Heart left ventricle (tissue), 16 donors: ENCODE measurements at regions of chr1 and their contacts with region 1.

Region 1: DNA sequence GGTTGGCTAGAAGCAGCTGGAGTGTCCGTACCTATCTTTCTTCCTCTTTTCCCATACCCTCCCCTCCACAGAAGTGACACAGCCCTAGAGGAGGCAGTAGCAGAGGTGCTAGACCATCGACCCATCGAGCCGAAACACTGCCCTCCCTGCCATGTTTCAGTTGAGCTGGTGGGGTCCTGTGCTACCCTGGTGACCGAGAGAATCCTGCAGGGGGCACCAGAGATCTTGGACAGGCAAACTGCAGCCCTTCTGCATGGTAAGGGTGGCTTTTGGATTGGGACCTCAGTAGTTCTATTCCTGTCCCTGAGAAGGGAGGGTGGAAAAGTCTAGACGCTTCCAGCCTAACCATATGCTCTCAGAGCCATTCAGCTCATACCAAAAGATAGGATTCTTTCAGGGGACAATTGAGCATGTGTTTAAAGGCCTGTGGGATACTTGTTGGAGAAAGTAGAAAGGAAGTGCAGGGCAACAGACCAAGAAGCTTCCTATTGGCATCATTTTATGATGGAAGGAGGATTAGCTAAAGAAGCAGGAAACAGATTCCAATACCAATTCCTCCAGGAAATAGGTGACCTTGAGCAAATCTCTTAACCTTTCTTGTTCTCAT is 11.7 kb upstream of the BNIPL start:
- DNase-seq: peak; percentile 85 to 90 (median 87)
- ATAC-seq: peak; percentile 88 to 95 (median 90)
- H3K4me3 ChIP-seq: no peak overlapping the region
- H3K27ac ChIP-seq: peak overlapping the region; percentile 37 to 87 (median 79)
- H3K4me1 ChIP-seq: peaks cover 0 to 30% (median 8%) of the 10 kb centered on the region in 12 donors
- H3K27me3 ChIP-seq: no peaks in the 10 kb centered on the region
- CTCF ChIP-seq: peak; percentile 63 to 84 (median 77)
- POLR2A ChIP-seq: no peak

Region 2: GRCh38 chr1:150955280-150955679 is 69.4 kb before region 1 on chr1:
- intact Hi-C with region 1: no loop called
- DNase-seq: no peak
- ATAC-seq: peak in 1 of 4 donors; percentile 57
- H3K4me3 ChIP-seq: no peak overlapping the region
- H3K27ac ChIP-seq: no peak overlapping the region
- H3K4me1 ChIP-seq: no peaks in the 10 kb centered on the region
- H3K27me3 ChIP-seq: no peaks in the 10 kb centered on the region
- CTCF ChIP-seq: no peak
- POLR2A ChIP-seq: no peak

Region 3: DNA sequence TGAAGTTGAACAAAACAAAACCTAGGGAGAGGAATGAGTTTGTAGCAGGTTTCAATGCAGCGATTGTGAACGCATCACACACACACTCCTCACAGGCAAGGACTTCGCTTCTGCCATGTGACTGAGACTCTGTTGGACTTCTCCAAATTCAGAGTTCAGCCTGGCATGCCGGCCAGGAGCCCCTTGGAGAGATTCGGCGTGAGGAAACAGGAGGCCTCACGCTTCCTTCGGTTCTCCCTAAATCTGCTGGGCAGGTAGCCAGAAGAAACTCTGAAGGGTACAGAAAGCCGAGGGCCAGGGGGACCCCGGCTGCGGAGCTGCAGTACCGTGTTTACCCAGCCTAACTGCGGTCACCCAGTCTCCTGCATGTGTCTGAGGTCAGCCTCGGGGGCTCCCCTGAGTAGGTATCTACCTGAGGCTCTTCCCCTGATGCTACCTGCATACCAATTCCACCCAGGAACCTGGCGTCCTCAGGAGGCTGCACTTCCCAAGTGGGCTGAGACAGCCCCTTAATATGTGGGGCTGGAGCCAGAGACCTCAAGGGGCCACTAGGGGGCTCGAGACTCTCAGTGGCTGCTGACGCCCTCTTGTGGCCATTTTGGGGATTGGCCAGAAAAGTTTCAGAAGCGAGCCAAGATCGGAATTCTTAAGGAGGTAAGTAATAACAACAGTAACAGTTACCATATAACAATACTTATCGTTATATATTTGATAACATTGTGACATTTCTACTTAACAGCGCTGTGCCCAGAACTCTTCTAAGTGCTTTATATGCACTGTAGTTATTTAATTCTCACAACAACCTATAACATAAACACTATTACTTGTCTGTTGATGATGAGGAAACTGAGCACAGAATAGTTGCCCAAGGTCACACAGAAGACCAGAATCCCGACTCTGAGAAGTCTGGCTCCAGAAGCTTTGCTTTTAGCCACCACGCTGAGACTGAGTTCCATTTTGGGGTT is 45.3 kb before region 1 on chr1:
- intact Hi-C with region 1: no loop called
- DNase-seq: peak; percentile 84 to 89 (median 87)
- ATAC-seq: peak; percentile 17 to 60 (median 40)
- H3K4me3 ChIP-seq: peak overlapping the region in 7 of 12 donors; percentile 4 to 48 (median 19)
- H3K27ac ChIP-seq: peak overlapping the region in 6 of 12 donors; percentile 22 to 86 (median 42)
- H3K4me1 ChIP-seq: peaks cover 0 to 49% (median 9%) of the 10 kb centered on the region in 12 donors
- H3K27me3 ChIP-seq: no peaks in the 10 kb centered on the region
- CTCF ChIP-seq: peak; percentile 99 to 100 (median 100)
- POLR2A ChIP-seq: no peak

Region 4: GRCh38 chr1:151008190-151008860 is 16.3 kb before region 1 on chr1 and contains the start of gene PRUNE1:
- intact Hi-C with region 1: no loop called
- DNase-seq: peak; percentile 97 to 98 (median 98)
- ATAC-seq: peak; percentile 80 to 94 (median 92)
- H3K4me3 ChIP-seq: peak within 1 kb of the TSS; percentile 35 to 87 (median 75)
- H3K27ac ChIP-seq: peak within 1 kb of the TSS; percentile 80 to 96 (median 91)
- H3K4me1 ChIP-seq: peaks cover 12 to 89% (median 66%) of the 10 kb centered on the region in 12 donors
- H3K27me3 ChIP-seq: no peaks in the 10 kb centered on the region
- CTCF ChIP-seq: peak in 2 of 12 donors; percentile 9
- POLR2A ChIP-seq: peak; percentile 56 to 83
- total RNA-seq, gene PRUNE1: 32.5 to 65.3 (median 42.0) TPM

Region 5: DNA sequence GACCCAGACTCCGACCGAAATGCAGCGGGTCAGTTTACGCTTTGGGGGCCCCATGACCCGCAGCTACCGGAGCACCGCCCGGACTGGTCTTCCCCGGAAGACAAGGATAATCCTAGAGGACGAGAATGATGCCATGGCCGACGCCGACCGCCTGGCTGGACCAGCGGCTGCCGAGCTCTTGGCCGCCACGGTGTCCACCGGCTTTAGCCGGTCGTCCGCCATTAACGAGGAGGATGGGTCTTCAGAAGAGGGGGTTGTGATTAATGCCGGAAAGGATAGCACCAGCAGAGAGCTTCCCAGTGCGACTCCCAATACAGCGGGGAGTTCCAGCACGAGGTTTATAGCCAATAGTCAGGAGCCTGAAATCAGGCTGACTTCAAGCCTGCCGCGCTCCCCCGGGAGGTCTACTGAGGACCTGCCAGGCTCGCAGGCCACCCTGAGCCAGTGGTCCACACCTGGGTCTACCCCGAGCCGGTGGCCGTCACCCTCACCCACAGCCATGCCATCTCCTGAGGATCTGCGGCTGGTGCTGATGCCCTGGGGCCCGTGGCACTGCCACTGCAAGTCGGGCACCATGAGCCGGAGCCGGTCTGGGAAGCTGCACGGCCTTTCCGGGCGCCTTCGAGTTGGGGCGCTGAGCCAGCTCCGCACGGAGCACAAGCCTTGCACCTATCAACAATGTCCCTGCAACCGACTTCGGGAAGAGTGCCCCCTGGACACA is 23.4 kb after region 1 on chr1:
- intact Hi-C with region 1: loop called in 2 of 10 experiments (anchors 1 kb)
- DNase-seq: peak; percentile 72 to 84 (median 79)
- ATAC-seq: peak; percentile 70 to 86 (median 84)
- H3K4me3 ChIP-seq: peak overlapping the region; percentile 60 to 87 (median 77)
- H3K27ac ChIP-seq: peak overlapping the region; percentile 53 to 95 (median 90)
- H3K4me1 ChIP-seq: peaks cover 0 to 42% (median 19%) of the 10 kb centered on the region in 12 donors
- H3K27me3 ChIP-seq: no peaks in the 10 kb centered on the region
- CTCF ChIP-seq: peak in 10 of 12 donors; percentile 30 to 65 (median 50)
- POLR2A ChIP-seq: no peak

Region 6: DNA sequence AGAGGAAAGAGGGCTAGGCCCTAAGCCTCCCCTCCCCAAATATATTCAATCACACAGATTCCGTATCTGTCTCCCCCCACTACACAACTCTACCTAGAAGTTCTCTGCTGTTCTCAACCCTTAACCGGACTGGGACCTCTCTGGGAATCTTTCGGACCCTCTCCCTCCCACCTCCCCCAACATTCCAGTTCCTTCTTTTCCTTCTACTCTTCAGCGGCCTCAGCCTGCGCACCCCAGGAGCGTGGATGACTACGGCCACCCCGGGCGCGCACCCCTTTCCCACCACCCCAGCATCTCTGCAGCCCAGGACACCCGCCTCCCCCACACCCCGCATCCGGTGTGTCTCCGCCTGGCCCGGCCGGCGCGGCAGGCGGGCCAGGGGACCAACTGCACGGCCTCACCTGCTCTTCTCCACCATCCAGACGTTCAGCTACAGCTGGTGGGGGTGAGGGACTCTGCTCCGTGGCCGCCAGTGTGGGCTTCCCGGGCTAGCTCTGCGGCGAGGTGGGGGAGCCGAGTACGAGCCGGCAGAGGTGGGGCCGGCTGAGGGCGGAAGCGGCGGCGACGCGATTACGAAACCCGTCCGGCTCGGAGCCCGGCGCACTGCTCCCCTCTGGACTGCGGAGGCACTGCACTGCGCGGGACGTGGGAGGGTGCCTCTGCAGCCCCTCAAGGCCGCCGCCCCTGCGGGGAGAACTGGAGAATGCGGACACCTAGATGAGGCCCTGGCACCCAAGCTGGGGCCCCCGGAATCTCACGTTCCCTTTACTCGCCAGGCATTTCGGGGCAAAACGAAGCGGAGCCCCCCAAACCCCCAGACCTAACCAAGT is 34.6 kb after region 1 on chr1 and contains the start of gene CDC42SE1:
- intact Hi-C with region 1: loop called in 3 of 10 experiments (anchors 5 kb)
- DNase-seq: peak; percentile 87 to 93 (median 90)
- ATAC-seq: peak; percentile 87 to 93 (median 92)
- H3K4me3 ChIP-seq: peak within 1 kb of the TSS; percentile 71 to 98 (median 90)
- H3K27ac ChIP-seq: peak within 1 kb of the TSS; percentile 92 to 99 (median 96)
- H3K4me1 ChIP-seq: peaks cover 8 to 53% (median 31%) of the 10 kb centered on the region in 12 donors
- H3K27me3 ChIP-seq: no peaks in the 10 kb centered on the region
- CTCF ChIP-seq: peak; percentile 61 to 94 (median 86)
- POLR2A ChIP-seq: peak; percentile 52 to 86
- total RNA-seq, gene CDC42SE1: 21.7 to 65.9 (median 28.2) TPM

Region 7: GRCh38 chr1:151070474-151071276 is 46.0 kb after region 1 on chr1 and contains the start of gene GABPB2:
- intact Hi-C with region 1: loop called in 2 of 10 experiments (anchors 2 to 5 kb)
- DNase-seq: peak; percentile 94 to 97 (median 95)
- ATAC-seq: peak; percentile 92 to 96 (median 94)
- H3K4me3 ChIP-seq: peak within 1 kb of the TSS; percentile 44 to 98 (median 81)
- H3K27ac ChIP-seq: peak within 1 kb of the TSS; percentile 92 to 100 (median 99)
- H3K4me1 ChIP-seq: peaks cover 0 to 23% (median 10%) of the 10 kb centered on the region in 12 donors
- H3K27me3 ChIP-seq: no peaks in the 10 kb centered on the region
- CTCF ChIP-seq: peak; percentile 88 to 99 (median 92)
- POLR2A ChIP-seq: peak in 1 of 2 donors; percentile 35
- total RNA-seq, gene GABPB2: 5.9 to 15.2 (median 11.7) TPM

Region 8: DNA sequence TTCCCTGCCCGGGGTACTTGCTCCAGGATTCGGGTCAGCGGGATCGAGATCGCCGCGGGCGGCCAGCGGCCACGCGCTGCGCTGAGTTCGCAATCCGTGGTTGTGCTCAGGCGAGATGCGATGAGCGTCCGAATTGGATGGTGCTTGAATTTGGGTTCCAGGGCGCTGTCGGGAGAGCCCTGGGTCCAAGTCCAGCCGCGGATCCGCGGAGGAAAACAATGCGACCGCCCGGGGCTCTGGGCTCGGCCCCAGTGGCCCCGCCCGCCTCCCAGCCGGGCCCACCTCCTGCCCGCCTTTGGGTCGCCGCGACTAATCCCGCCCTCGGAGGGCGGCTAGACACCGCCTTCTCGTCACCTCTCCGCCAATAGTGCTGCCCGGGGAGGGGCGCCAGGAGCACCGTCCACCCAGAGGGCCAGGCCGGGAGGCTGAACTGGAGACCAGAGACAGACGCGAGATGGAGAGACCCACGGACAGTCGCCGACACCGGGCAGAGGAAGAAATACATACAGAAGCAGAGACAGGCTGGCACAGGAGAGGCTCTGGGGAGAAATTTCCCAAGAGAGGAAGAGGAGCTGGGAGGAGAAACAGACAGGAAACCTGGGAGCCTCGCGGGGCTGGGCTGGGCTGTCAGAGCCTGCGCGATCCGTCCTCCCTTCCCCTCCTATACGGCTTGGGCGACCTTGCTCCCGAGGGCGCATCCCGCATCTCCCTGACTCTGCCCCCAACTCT is 121.9 kb after region 1 on chr1 and contains the start of gene SEMA6C:
- intact Hi-C with region 1: loop called in 3 of 10 experiments (anchors 10 kb)
- DNase-seq: peak; percentile 97 to 98 (median 98)
- ATAC-seq: peak; percentile 93 to 95 (median 93)
- H3K4me3 ChIP-seq: peak within 1 kb of the TSS; percentile 66 to 97 (median 84)
- H3K27ac ChIP-seq: peak within 1 kb of the TSS; percentile 79 to 92 (median 87)
- H3K4me1 ChIP-seq: peaks cover 13 to 53% (median 39%) of the 10 kb centered on the region in 12 donors
- H3K27me3 ChIP-seq: peaks cover 0 to 5% (median 0%) of the 10 kb centered on the region in 9 donors
- CTCF ChIP-seq: no peak
- POLR2A ChIP-seq: peak; percentile 94 to 97
- total RNA-seq, gene SEMA6C: 36.4 to 97.1 (median 50.8) TPM

Region 9: GRCh38 chr1:151273925-151274466 is 249.4 kb after region 1 on chr1:
- intact Hi-C with region 1: no loop called
- DNase-seq: no peak
- ATAC-seq: no peak
- H3K4me3 ChIP-seq: no peak overlapping the region
- H3K27ac ChIP-seq: no peak overlapping the region
- H3K4me1 ChIP-seq: peaks cover 0 to 29% (median 4%) of the 10 kb centered on the region in 12 donors
- H3K27me3 ChIP-seq: no peaks in the 10 kb centered on the region
- CTCF ChIP-seq: no peak
- POLR2A ChIP-seq: no peak